Endothelial cell of umbilical vein (primary cell): ENCODE measurements at regions of chr2 and their contacts with region 1.

Region 1: DNA sequence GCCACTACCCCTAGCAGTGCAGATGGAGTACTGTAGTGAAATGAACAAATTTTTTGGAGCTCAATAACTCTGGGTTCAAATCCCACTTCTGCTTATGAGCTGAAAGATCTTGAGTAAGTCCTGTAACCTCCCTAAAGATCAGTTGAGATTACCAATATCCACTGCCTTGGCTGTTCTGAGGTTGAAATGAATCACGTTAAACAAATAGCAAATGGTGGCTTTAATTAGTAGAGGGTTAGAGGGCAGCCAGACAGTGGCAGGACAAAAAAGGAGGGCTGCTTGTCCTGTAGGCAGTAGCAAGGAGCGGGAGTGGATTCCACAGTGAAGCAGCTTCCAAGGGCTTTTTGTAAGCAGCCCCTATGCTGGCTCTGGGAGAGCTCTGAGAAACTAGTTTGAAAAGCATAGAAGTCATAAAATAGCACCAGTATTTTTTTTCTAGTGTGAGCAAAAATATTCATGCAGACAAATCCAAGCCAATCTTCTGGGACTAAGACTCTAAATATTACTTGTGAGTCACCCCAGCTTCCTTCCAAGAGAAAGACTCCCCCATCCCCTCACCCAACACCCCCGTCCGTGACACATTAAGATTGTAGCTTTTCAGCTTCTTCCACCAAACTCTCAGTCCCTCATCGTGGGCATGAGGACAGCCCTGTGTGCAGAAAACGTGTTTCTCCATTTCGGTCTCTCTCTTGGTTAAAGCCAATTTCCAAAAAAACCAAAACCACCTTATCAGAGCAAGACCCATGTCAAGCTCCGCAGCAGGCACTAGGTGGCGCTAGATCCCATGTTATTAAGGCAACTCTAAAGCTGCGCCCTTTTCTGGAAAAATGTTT is 123.5 kb upstream of the LGALSL start:
- DNase-seq: peak; percentile 86
- H3K4me3 ChIP-seq: peak overlapping the region; percentile 15 to 34 (median 20)
- H3K27ac ChIP-seq: no peak overlapping the region
- H3K4me1 ChIP-seq: peaks cover 14% of the 10 kb centered on the region
- H3K27me3 ChIP-seq: no peaks in the 10 kb centered on the region
- CTCF ChIP-seq: peak; percentile 83 to 87
- POLR2A ChIP-seq: no peak

Region 2: DNA sequence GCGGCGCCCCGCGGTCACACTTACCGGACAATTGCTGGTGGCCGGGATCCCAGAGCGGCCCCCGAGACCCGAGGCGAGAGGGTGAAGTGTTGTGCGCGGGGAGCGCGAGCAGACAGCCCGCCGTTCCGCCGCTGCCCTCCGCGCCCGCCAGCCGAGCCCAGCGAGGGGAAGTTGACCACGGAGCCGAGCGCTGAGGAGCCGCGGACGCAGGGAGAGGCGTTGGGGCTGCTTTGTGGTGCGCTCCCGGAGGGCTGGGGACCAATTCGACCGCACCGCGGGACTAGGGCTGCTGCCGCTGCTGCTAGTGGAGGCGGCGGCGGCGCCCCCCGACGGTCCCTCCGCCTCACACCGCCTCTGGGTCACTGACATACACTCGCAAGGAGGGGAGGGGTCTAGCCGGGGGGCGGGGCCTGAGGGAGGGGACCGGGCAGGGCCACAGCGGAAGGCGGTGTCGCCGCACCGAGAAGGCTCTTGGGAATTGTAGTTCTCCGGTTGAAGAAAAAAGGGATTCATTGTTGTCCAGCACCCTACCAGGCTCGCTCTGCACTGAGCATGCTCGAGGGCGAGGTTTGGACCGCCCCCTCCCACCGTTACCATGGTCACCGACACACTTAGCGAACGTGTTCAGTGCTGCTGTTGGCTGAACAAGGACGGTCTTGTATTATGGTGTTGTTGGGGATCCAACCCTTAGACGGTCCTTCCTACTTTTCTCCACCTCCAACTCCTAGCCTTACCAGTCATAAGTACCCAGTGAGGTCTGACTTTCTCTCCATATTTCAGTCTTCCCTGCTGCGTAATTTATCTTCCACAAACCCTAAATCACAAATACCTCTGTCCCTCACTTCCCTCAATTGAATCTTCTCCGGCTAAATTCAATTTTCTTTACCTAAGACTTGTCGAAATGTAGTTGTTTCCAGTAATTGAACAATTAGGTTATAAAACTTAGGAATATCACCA is 186.2 kb before region 1 on chr2 and contains the start of gene PELI1:
- CTCF ChIA-PET with region 1: interaction called, 32 read pairs
- POLR2A ChIA-PET with region 1: no interaction called
- dilution Hi-C with region 1: no loop called
- intact Hi-C with region 1: loop called (anchors 1 kb)
- DNase-seq: peak; percentile 99
- H3K4me3 ChIP-seq: peak within 1 kb of the TSS; percentile 70 to 90 (median 83)
- H3K27ac ChIP-seq: peak within 1 kb of the TSS; percentile 74
- H3K4me1 ChIP-seq: peaks cover 18% of the 10 kb centered on the region
- H3K27me3 ChIP-seq: peaks cover 0 to 4% of the 10 kb centered on the region in 2 experiments
- CTCF ChIP-seq: peak in 1 of 2 donors; percentile 34
- POLR2A ChIP-seq: peak; percentile 95
- total RNA-seq, gene PELI1: 30.9 and 39.9 TPM in 2 replicates

Region 3: GRCh38 chr2:64318476-64318748 is 12.1 kb before region 1 on chr2:
- CTCF ChIA-PET with region 1: interaction called, 76 read pairs
- POLR2A ChIA-PET with region 1: no interaction called
- dilution Hi-C with region 1: no loop called
- intact Hi-C with region 1: no loop called
- DNase-seq: no peak
- H3K4me3 ChIP-seq: no peak overlapping the region
- H3K27ac ChIP-seq: no peak overlapping the region
- H3K4me1 ChIP-seq: no peaks in the 10 kb centered on the region
- H3K27me3 ChIP-seq: peaks cover 0 to 12% of the 10 kb centered on the region in 2 experiments
- CTCF ChIP-seq: no peak
- POLR2A ChIP-seq: no peak

Region 4: GRCh38 chr2:64380853-64381527 is 50.5 kb after region 1 on chr2:
- CTCF ChIA-PET with region 1: no interaction called
- POLR2A ChIA-PET with region 1: no interaction called
- dilution Hi-C with region 1: no loop called
- intact Hi-C with region 1: no loop called
- DNase-seq: no peak
- H3K4me3 ChIP-seq: no peak overlapping the region
- H3K27ac ChIP-seq: no peak overlapping the region
- H3K4me1 ChIP-seq: no peaks in the 10 kb centered on the region
- H3K27me3 ChIP-seq: no peaks in the 10 kb centered on the region
- CTCF ChIP-seq: no peak
- POLR2A ChIP-seq: no peak

Region 5: DNA sequence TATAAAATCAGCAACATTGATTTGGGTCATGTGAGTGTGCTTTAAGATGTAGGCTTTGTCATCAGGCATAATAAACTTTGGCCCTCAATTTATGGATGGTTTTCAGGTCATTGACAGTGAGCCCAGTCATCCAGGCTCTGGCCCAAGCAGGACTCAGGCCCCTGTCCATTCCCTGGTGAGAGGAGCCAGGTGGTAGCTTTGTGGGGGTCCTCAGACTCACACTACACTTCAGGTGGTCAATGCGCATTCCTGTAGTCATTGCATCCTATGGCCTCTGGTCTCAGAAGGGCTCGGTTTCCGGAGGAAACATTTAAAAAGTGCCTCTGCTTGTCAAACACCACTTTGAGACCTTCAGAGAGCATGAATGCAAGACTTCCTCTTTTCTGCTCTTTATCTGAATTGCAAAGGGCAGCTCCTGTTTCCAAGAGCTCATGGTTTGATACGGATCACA is 143.6 kb after region 1 on chr2:
- CTCF ChIA-PET with region 1: interaction called, 14 read pairs
- POLR2A ChIA-PET with region 1: no interaction called
- dilution Hi-C with region 1: no loop called
- intact Hi-C with region 1: no loop called
- DNase-seq: no peak
- H3K4me3 ChIP-seq: no peak overlapping the region
- H3K27ac ChIP-seq: no peak overlapping the region
- H3K4me1 ChIP-seq: no peaks in the 10 kb centered on the region
- H3K27me3 ChIP-seq: peaks cover 0 to 5% of the 10 kb centered on the region in 2 experiments
- CTCF ChIP-seq: no peak
- POLR2A ChIP-seq: no peak

Region 6: GRCh38 chr2:64514008-64514407 is 183.5 kb after region 1 on chr2:
- CTCF ChIA-PET with region 1: interaction called, 13 read pairs
- POLR2A ChIA-PET with region 1: no interaction called
- dilution Hi-C with region 1: no loop called
- intact Hi-C with region 1: no loop called
- DNase-seq: no peak
- H3K4me3 ChIP-seq: no peak overlapping the region
- H3K27ac ChIP-seq: no peak overlapping the region
- H3K4me1 ChIP-seq: no peaks in the 10 kb centered on the region
- H3K27me3 ChIP-seq: peaks cover 32 to 42% of the 10 kb centered on the region in 2 experiments
- CTCF ChIP-seq: no peak
- POLR2A ChIP-seq: no peak

Region 7: GRCh38 chr2:64644177-64645004 is 313.9 kb after region 1 on chr2:
- CTCF ChIA-PET with region 1: interaction called, 29 read pairs
- POLR2A ChIA-PET with region 1: no interaction called
- dilution Hi-C with region 1: no loop called
- intact Hi-C with region 1: loop called (anchors 1 kb)
- DNase-seq: peak; percentile 84
- H3K4me3 ChIP-seq: peak overlapping the region; percentile 3 to 53 (median 30)
- H3K27ac ChIP-seq: peak overlapping the region; percentile 87
- H3K4me1 ChIP-seq: peaks cover 29% of the 10 kb centered on the region
- H3K27me3 ChIP-seq: no peaks in the 10 kb centered on the region
- CTCF ChIP-seq: no peak
- POLR2A ChIP-seq: no peak

Region 8: DNA sequence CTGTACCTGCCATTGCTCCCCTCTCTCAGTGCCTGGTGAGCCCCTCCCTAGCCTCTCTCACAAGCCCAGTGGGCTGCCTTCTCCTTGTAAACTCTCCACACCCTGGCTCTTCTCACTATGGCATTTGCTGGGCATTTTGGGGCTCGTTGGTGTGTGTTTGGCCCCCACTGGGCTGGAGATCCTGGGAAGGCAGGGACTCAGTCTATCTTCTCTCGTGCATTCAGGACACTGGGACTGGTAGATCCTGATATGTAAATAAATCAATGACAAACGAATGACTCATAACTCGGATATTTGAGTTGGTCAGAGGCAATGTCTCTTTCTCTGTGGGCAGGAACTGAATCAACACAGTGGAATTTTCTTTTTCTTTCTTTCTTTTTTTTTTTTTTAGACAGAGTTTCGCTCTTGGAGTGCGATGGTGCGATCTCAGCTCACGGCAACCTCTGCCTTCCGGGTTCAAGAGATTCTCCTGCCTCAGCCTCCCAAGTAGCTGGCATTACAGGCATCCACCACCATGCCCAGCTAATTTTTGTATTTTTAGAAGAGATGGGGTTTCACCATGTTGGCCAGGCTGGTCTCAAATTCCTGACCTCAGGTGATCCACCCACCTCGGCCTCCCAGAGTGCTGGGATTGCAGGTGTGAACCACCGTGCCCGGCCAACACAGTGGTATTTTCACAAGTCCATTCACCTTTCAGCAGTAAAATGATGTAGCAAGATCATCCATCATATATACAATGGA is 1246.5 kb after region 1 on chr2:
- CTCF ChIA-PET with region 1: no interaction called
- POLR2A ChIA-PET with region 1: no interaction called
- dilution Hi-C with region 1: no loop called
- intact Hi-C with region 1: loop called (anchors 2 kb)
- DNase-seq: peak; percentile 87
- H3K4me3 ChIP-seq: no peak overlapping the region
- H3K27ac ChIP-seq: peak overlapping the region; percentile 88
- H3K4me1 ChIP-seq: peaks cover 19% of the 10 kb centered on the region
- H3K27me3 ChIP-seq: no peaks in the 10 kb centered on the region
- CTCF ChIP-seq: no peak
- POLR2A ChIP-seq: no peak